ENCODE measurements at regions of chr3 and their contacts with region 1.

Region 1: GRCh38 chr3:185120171-185120570 is 32.7 kb downstream of the C3orf70 start:
- DNase-seq: no peak

Region 2: DNA sequence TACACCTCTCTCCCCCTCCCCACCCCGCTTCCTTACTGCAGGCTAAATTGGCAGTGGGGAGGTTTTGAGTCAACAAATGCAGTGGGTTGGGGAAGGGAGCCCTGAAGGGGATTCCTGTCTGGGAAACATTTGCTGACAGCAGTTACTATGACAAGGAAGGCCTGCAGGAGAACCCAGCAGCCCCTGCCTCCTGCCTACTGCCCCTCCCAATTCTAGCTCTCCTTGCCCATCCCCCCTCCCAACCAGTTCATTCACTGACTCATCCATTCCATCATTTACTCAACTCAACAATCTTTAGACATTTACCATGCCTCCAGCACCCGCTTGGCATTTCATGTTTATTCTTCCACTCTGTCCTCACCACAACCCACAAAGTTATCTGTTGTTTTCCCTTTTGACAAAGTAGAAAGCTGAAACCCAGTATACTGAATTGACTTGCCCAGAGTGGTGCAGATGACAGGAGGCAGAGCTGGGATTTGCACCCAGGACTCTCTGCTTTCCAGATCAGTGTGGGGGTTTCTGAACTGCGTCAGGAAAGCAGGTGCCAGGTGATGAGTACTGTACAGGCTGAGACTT is 483.3 kb before region 1 on chr3:
- intact Hi-C with region 1: no loop called
- DNase-seq: no peak

Region 3: GRCh38 chr3:185070491-185071286 is 49.5 kb before region 1 on chr3:
- intact Hi-C with region 1: loop called in 1 of 2 experiments (anchors 2 kb)
- DNase-seq: no peak